WTC11 (cell line): ENCODE measurements at regions of chr18 and their contacts with region 1.

Region 1: DNA sequence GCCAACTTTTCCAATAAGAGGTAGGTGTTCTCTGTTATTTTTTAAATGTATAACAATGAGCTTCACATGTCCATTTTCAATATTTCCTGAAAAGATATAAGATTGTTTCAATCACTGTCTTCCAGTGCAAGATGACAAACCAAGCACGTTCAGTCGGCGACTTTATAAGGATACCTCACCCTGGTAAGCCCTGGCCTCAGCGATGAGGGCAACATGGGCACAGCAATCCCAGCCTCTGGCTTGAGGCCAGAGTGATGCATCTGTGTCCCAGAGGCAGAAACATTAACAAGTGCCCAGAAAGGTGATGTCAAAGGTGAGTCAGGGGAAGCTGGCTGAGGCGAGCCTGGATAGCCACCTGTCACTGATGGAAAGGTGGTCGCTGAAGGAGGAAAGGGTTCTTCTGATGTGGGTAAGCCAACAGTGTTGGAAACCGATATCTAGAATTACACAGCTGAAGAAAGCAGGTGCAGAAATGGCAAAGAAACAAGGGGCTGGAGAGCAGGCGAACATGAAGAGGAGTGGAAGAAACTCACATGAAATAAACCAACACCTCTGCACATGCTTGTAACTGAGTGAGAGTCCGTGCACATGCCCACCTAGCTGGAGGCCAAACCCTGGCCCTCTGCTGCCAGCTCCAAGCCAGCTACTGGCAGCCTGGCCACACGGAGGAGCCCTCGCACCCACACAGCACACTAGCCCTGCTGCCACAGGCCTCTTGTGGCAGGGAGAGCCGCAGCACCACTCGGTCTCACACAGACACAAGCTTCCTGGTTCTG is 65.5 kb downstream of the FBXO15 start:
- DNase-seq: peak; percentile 74
- ATAC-seq: peak; percentile 100
- H3K4me3 Mint-ChIP-seq: no peak overlapping the region
- H3K27ac Mint-ChIP-seq: no peak overlapping the region
- H3K4me1 Mint-ChIP-seq: peaks cover 3% of the 10 kb centered on the region
- H3K27me3 Mint-ChIP-seq: no peaks in the 10 kb centered on the region
- CTCF ChIP-seq: no peak; the same call in 1 of the 2 replicates

Region 2: GRCh38 chr18:73733806-73734314 is 348.3 kb before region 1 on chr18:
- CTCF ChIA-PET with region 1: no interaction called
- POLR2A ChIA-PET with region 1: no interaction called
- DNase-seq: no peak
- ATAC-seq: no peak
- H3K4me3 Mint-ChIP-seq: no peak overlapping the region
- H3K27ac Mint-ChIP-seq: no peak overlapping the region
- H3K4me1 Mint-ChIP-seq: peaks cover 7% of the 10 kb centered on the region
- H3K27me3 Mint-ChIP-seq: no peaks in the 10 kb centered on the region
- CTCF ChIP-seq: no peak

Region 3: DNA sequence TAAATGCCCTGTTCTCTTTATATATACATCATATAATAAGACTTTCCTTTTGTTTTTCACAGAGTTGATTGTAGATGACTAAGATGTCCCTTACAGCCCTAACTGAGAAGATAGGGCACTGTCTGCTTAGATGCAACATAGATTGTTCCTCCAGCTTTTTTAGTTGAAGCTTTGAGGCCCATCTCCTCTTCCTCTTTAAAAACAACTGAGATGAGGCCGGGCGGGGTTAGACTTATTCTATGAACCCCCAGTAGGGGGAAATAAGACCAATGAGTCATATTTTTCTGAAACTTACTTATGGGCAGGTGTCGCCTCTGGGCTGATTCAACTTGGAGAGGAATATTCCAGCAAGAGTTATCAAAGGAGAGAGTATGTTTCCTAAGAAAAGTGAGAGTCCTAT is 19.1 kb before region 1 on chr18:
- CTCF ChIA-PET with region 1: interaction called, 12 read pairs
- POLR2A ChIA-PET with region 1: no interaction called
- DNase-seq: no peak
- ATAC-seq: no peak
- H3K4me3 Mint-ChIP-seq: no peak overlapping the region
- H3K27ac Mint-ChIP-seq: no peak overlapping the region
- H3K4me1 Mint-ChIP-seq: peaks cover 8% of the 10 kb centered on the region
- H3K27me3 Mint-ChIP-seq: no peaks in the 10 kb centered on the region
- CTCF ChIP-seq: no peak

Region 4: DNA sequence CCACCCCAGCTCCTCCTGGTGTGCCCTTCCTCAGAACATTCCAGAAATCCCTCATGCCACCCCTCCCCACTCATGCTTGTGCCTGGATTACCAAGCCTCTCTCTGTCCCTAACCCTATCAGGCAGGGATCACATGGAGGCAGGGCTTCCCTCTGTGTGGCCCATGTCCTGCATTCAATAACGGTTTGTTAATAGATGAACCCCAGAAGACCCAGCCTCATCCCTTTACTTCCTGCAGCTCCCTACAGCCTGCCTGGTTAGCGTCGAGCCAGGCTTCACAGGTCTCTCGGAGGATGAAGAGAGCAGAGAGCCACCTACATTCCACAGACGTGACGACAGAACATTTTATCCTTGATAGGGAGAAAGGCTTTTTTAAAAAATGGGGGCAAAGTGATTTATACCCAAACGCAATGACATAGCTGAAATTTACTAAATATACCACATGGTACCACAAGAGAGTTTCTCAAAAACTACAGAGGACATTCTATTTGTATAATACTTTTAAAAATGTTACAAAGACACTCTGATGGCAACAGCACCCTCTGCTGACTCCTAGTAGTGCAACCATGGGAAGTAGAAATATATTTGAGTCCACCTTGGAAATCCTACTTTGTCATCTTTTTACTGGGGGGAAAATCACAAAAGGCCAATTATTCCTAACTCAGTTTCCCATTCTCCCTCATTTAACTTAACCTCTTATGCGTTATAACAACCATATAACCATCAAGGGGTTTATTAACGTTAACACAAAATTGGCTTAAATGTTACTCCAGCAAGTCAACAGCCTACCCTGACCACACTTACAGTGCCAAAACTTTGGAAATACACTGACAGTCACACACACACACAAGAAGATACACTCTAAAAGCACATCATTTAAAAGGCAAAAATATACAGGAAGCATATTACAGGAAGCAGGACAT is 34.7 kb after region 1 on chr18:
- CTCF ChIA-PET with region 1: interaction called, 52 read pairs
- POLR2A ChIA-PET with region 1: no interaction called
- DNase-seq: peak; percentile 20
- ATAC-seq: peak; percentile 93
- H3K4me3 Mint-ChIP-seq: no peak overlapping the region
- H3K27ac Mint-ChIP-seq: no peak overlapping the region
- H3K4me1 Mint-ChIP-seq: peaks cover 33% of the 10 kb centered on the region
- H3K27me3 Mint-ChIP-seq: peaks cover 4% of the 10 kb centered on the region; the same call in 1 of the 2 replicates
- CTCF ChIP-seq: 0 out of 2 replicates have a peak, but pooled peaks have one; percentile 28

Region 5: GRCh38 chr18:74139888-74140287 is 57.7 kb after region 1 on chr18:
- CTCF ChIA-PET with region 1: interaction called, 14 read pairs
- POLR2A ChIA-PET with region 1: no interaction called
- DNase-seq: no peak
- ATAC-seq: no peak
- H3K4me3 Mint-ChIP-seq: no peak overlapping the region
- H3K27ac Mint-ChIP-seq: no peak overlapping the region
- H3K4me1 Mint-ChIP-seq: peaks cover 11% of the 10 kb centered on the region; the same call in 1 of the 2 replicates
- H3K27me3 Mint-ChIP-seq: peaks cover 4% of the 10 kb centered on the region
- CTCF ChIP-seq: no peak

Region 6: GRCh38 chr18:74184875-74185274 is 102.7 kb after region 1 on chr18:
- CTCF ChIA-PET with region 1: no interaction called
- POLR2A ChIA-PET with region 1: no interaction called
- DNase-seq: no peak
- ATAC-seq: peak; percentile 60
- H3K4me3 Mint-ChIP-seq: no peak overlapping the region
- H3K27ac Mint-ChIP-seq: no peak overlapping the region
- H3K4me1 Mint-ChIP-seq: peaks cover 26% of the 10 kb centered on the region
- H3K27me3 Mint-ChIP-seq: no peaks in the 10 kb centered on the region
- CTCF ChIP-seq: no peak

Region 7: GRCh38 chr18:74196220-74197119 is 114.3 kb after region 1 on chr18:
- CTCF ChIA-PET with region 1: interaction called, 10 read pairs
- POLR2A ChIA-PET with region 1: no interaction called
- DNase-seq: no peak
- ATAC-seq: peak; percentile 80
- H3K4me3 Mint-ChIP-seq: peak overlapping the region; percentile 54
- H3K27ac Mint-ChIP-seq: peak overlapping the region; percentile 88
- H3K4me1 Mint-ChIP-seq: peaks cover 19% of the 10 kb centered on the region
- H3K27me3 Mint-ChIP-seq: no peaks in the 10 kb centered on the region
- CTCF ChIP-seq: peak; percentile 80